ENCODE measurements at regions of chr10 and their contacts with region 1.

Region 1: DNA sequence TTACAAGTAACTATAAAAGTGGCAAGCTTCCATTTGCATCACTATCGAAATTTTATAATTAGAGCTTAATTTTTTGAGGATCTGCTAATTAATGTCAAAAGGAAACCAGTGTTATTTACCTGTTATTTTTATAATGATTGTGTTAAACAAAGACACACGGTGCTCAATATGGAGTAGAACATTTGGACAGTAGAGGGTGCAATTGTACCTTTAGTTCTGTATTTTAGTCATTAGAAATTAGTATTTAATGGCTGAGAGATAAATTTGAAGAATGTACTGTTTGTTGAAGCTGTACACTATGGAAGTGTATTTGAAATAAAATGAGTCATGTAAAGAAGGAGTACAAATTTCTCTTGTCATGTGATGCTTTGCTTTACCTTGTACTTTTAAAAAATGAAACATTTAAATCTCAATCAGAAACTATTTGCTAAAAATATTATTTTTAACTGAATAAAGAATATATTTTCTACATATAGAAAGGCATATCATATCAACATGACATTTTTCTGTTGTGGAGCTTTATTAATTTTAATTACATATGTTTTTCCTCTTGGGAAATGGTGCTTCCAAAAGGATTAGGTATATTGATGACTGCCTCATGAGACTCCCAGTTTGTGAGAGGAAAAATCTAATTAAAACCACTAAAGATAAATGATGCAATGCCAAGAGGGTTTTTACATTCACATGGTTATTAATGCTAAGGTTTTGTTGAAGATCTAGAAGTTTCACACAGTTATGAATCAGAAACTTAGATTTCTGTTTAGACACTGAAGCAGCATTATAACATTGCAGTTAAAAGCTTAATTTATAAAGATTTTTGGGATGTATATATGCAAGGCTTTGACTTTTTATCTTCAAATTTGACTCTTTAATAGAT is 10.4 kb upstream of the PRKG1 start:
- DNase-seq: no peak
- ATAC-seq: no peak
- H3K4me3 Mint-ChIP-seq: no peak overlapping the region
- H3K27ac Mint-ChIP-seq: no peak overlapping the region
- H3K4me1 Mint-ChIP-seq: no peaks in the 10 kb centered on the region
- H3K27me3 Mint-ChIP-seq: no peaks in the 10 kb centered on the region
- CTCF ChIP-seq: no peak

Region 2: GRCh38 chr10:50917486-50917885 is 146.4 kb before region 1 on chr10:
- CTCF ChIA-PET with region 1: no interaction called
- POLR2A ChIA-PET with region 1: no interaction called
- intact Hi-C with region 1: no loop called
- DNase-seq: no peak
- ATAC-seq: no peak
- H3K4me3 Mint-ChIP-seq: no peak overlapping the region
- H3K27ac Mint-ChIP-seq: no peak overlapping the region
- H3K4me1 Mint-ChIP-seq: no peaks in the 10 kb centered on the region
- H3K27me3 Mint-ChIP-seq: no peaks in the 10 kb centered on the region
- CTCF ChIP-seq: no peak

Region 3: DNA sequence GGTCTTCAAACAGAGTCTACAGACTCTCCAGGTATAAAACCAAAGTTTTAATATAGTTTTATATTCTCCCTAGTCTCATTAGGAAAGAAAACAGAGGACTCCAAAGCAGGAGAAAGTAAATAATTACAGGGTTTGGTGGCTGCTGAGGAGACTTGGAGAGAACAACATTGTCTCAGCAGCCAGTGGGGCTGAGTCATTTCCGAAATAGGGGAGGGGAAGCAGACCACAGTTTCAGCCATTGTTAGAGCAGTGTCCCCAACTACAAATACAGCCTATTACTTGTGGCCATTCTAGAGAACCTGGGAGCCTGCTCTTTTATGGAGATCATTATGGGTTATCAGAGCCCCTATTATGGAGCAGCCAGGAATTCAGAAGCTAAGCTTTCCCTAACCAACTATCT is 134.2 kb before region 1 on chr10:
- CTCF ChIA-PET with region 1: no interaction called
- POLR2A ChIA-PET with region 1: no interaction called
- intact Hi-C with region 1: no loop called
- DNase-seq: no peak
- ATAC-seq: no peak
- H3K4me3 Mint-ChIP-seq: no peak overlapping the region
- H3K27ac Mint-ChIP-seq: no peak overlapping the region
- H3K4me1 Mint-ChIP-seq: no peaks in the 10 kb centered on the region
- H3K27me3 Mint-ChIP-seq: no peaks in the 10 kb centered on the region
- CTCF ChIP-seq: no peak

Region 4: DNA sequence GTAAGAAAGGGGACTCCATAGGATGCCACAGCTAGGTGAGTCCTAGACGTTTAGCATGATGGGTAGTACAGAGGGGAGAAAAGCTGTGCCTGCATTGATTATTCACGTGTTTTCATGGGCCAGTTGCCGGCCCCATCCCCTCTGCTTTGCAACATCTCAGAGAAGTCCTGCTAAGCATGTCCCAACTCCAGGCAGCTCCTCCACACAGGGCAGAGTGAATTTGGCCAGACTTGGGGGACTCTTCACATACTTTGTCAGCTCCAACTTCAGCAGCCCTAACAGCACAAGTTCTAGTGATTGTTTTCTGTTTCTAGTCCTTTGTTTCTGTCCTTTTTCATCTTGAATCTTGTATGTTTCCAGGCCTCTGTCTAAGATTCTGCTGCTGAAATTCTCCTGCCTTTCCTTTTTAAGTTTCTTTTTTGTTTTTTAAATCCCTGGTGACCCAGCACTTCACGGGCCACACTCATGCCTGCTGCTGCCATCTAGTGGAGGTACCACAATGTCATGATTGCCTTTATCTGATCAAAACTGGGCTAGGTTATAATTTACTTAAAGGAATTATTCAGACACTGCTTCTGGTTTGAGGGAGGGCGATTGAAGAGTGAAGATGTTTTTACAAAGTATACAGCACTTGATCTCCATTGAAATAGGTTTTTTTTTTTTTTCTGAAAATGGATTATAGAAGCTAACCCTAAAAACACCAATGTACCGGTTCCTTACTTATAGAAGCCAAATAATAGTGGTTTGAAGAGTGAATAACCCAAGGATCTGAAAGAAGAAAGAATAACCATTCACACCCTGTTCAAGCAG is 358.6 kb after region 1 on chr10:
- CTCF ChIA-PET with region 1: no interaction called
- POLR2A ChIA-PET with region 1: no interaction called
- intact Hi-C with region 1: loop called (anchors 5 kb)
- DNase-seq: no peak
- ATAC-seq: no peak
- H3K4me3 Mint-ChIP-seq: no peak overlapping the region
- H3K27ac Mint-ChIP-seq: no peak overlapping the region
- H3K4me1 Mint-ChIP-seq: no peaks in the 10 kb centered on the region
- H3K27me3 Mint-ChIP-seq: no peaks in the 10 kb centered on the region
- CTCF ChIP-seq: no peak

Measured in activated B cell treated with CpG ODN at 0.5 μM for 24 hours (primary cell).